Caco-2 (cell line): ENCODE measurements at regions of chr3 and their contacts with region 1.

Region 1: DNA sequence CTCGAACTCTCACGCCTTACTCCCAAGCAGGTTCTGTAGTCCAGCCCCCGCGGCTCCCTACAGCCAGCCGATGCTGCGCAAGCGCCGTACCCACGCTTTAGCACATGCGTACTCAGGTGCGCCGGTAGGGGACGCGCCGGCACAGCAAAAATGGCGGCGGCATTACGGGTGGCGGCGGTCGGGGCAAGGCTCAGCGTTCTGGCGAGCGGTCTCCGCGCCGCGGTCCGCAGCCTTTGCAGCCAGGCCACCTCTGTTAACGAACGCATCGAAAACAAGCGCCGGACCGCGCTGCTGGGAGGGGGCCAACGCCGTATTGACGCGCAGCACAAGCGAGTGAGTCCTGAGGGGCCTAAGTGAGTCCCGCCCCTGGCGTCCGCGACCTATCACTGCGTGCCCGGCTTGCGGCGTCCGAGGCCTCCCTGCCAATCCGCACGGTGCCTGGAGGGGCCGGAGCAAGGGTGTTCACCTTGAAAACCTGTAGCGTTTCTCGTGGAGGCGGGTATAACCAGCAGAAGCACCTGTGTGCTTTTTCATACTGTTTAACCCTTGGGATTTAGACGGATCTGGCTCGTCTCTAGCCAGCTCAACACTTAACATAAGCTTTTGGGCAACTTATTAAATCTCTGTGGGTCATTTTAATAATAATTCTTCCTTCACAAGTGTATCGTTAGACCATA is at the start of gene PCCB:
- DNase-seq: peak; percentile 97 to 98
- H3K4me3 ChIP-seq: peak within 1 kb of the TSS; percentile 44
- H3K4me3 Mint-ChIP-seq: peak within 1 kb of the TSS; percentile 80
- H3K27ac Mint-ChIP-seq: peak within 1 kb of the TSS; percentile 99
- H3K4me1 ChIP-seq: peaks cover 33% of the 10 kb centered on the region
- H3K4me1 Mint-ChIP-seq: peaks cover 33% of the 10 kb centered on the region
- H3K27me3 ChIP-seq: no peaks in the 10 kb centered on the region
- H3K27me3 Mint-ChIP-seq: no peaks in the 10 kb centered on the region
- CTCF ChIP-seq: peak; percentile 76 to 87
- total RNA-seq, gene PCCB: 39.7 and 45.5 TPM in 2 replicates

Region 2: DNA sequence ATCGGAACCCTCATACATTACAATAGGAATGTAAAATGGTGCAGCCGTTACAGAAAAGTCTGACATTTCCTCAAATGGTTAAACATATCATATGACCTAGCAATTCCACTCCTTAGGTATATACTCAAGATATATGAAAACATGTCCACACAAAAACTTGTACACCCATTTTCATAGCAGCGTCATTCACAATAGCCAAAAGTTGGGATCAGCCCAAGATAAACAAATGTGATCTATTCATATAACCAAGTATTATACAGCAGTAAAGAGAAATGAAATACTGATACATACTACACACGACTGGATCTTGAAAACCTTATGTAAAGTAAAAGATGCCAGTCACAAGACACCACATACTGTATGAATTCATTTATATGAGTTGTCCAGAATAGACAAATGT is 156.6 kb before region 1 on chr3:
- CTCF ChIA-PET with region 1: no interaction called
- POLR2A ChIA-PET with region 1: no interaction called
- intact Hi-C with region 1: loop called (anchors 5 kb)
- DNase-seq: no peak
- H3K4me3 ChIP-seq: no peak overlapping the region
- H3K4me3 Mint-ChIP-seq: no peak overlapping the region
- H3K27ac Mint-ChIP-seq: no peak overlapping the region
- H3K4me1 ChIP-seq: peaks cover 5% of the 10 kb centered on the region
- H3K4me1 Mint-ChIP-seq: peaks cover 1% of the 10 kb centered on the region
- H3K27me3 ChIP-seq: no peaks in the 10 kb centered on the region
- H3K27me3 Mint-ChIP-seq: no peaks in the 10 kb centered on the region
- CTCF ChIP-seq: no peak

Region 3: DNA sequence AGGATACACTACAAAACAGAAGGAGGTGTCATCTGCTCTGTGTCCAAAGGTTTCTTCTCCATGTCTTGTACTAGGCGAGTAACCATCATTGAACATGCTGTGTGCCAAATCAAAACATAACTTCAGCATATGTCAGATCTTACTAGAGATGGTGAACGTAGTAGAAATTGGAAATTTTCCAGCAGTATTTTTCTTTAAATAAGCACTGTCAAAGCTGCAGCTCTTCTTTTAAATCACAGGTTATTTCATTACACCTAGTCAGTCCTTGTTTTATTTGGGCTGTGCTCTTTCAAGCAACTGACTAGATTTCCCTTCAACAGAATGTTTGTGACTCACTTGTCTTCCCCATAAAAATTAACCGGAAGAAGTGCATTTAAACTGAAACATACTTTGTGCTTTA is 100.7 kb before region 1 on chr3:
- CTCF ChIA-PET with region 1: interaction called, 3 read pairs
- POLR2A ChIA-PET with region 1: no interaction called
- intact Hi-C with region 1: loop called (anchors 5 kb)
- DNase-seq: no peak
- H3K4me3 ChIP-seq: no peak overlapping the region
- H3K4me3 Mint-ChIP-seq: no peak overlapping the region
- H3K27ac Mint-ChIP-seq: no peak overlapping the region
- H3K4me1 ChIP-seq: peaks cover 22% of the 10 kb centered on the region
- H3K4me1 Mint-ChIP-seq: peaks cover 29% of the 10 kb centered on the region
- H3K27me3 ChIP-seq: no peaks in the 10 kb centered on the region
- H3K27me3 Mint-ChIP-seq: no peaks in the 10 kb centered on the region
- CTCF ChIP-seq: no peak